ENCODE measurements at regions of chr6 and their contacts with region 1.

Region 1: GRCh38 chr6:150273457-150274309 is 95.1 kb upstream of the IYD start:
- DNase-seq: no peak
- H3K4me3 Mint-ChIP-seq: no peak overlapping the region
- H3K27ac Mint-ChIP-seq: no peak overlapping the region
- H3K4me1 Mint-ChIP-seq: peaks cover 35% of the 10 kb centered on the region
- H3K27me3 Mint-ChIP-seq: no peaks in the 10 kb centered on the region
- CTCF ChIP-seq: no peak

Region 2: DNA sequence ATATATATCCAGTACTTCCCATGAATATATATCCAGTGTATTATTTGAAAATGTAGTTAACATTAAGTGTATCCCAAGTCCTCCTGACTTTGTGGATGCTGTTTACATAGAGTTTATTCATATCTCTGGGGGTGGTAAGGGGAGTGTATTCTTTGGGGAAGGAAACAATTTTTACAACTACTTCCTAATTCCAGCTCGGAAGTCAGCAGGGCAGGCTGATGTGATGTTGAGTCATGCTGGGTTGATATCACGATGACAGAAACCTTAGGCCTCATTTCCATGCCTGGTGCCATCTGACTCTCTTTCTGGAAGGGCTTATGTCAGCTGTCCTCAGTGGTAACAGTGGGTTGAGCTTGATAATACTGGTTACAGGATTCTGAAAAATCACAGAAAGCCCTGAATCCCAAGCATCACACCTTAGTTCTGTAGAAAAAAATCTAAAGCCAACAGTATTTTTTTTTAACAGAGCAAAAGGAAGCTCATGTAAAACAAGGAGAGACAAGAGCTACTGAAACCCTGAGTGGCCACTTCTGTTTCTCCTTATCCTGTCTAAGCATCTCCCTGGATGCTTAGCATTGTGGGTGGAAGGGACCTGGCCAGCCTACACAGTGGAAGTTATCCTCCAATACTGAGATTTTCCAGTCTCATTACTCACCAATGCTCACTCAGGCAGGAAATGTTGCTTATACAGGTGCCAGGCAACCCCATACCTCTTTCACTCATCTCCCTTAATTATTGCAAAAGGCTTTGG is 19.9 kb after region 1 on chr6:
- CTCF ChIA-PET with region 1: interaction called, 4 read pairs
- POLR2A ChIA-PET with region 1: interaction called, 116 read pairs
- intact Hi-C with region 1: loop called (anchors 1 kb)
- DNase-seq: peak; percentile 69
- H3K4me3 Mint-ChIP-seq: no peak overlapping the region
- H3K27ac Mint-ChIP-seq: peak overlapping the region; percentile 98
- H3K4me1 Mint-ChIP-seq: peaks cover 46% of the 10 kb centered on the region
- H3K27me3 Mint-ChIP-seq: no peaks in the 10 kb centered on the region
- CTCF ChIP-seq: no peak

Region 3: GRCh38 chr6:150352321-150353291 is 78.9 kb after region 1 on chr6:
- CTCF ChIA-PET with region 1: no interaction called
- POLR2A ChIA-PET with region 1: no interaction called
- intact Hi-C with region 1: no loop called
- DNase-seq: peak; percentile 29
- H3K4me3 Mint-ChIP-seq: no peak overlapping the region
- H3K27ac Mint-ChIP-seq: no peak overlapping the region
- H3K4me1 Mint-ChIP-seq: peaks cover 8% of the 10 kb centered on the region
- H3K27me3 Mint-ChIP-seq: no peaks in the 10 kb centered on the region
- CTCF ChIP-seq: no peak